ENCODE measurements at regions of chr10 and their contacts with region 1.

Region 1: DNA sequence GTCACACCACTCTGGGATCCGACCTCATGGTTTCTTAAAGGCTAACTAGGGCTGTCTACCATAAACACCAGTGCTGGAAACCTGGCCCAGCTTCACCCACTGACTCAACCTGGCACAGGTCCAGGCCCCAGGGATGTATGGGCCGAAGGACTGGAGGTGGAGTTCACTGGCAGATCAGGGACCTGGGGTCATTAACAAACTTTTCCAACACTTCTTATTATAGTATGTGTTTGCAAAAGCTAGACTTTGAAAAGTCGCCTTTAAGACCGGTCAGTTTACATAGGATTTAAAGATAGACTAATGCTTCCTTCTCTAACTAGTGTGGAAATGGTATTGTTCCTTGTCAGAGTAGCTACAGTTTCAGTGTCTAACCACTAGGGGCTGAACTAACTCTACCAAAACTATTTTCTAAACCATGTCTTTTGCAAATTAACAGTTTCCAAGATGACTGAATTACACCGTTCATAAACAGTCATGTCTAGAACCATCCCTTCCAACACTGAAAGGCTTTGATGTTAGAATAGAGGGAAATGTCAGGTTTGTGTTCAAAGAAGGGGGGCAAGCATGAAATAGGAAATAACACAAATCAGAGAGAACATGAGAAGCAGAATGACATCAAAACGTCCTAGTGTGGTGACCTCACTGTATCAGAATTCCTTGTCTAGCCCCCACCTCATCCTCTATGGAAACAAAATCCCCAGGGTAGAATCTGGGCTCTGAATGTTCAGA is 29.7 kb downstream of the STN1 start:
- DNase-seq: peak; percentile 73 to 86
- ATAC-seq: peak; percentile 86 to 89
- H3K4me3 ChIP-seq: no peak overlapping the region
- H3K27ac ChIP-seq: peak overlapping the region; percentile 78 to 86 (median 82)
- H3K4me1 ChIP-seq: peaks cover 18 to 28% of the 10 kb centered on the region in 2 donors
- H3K27me3 ChIP-seq: no peaks in the 10 kb centered on the region
- CTCF ChIP-seq: peak; percentile 81 to 96 (median 83)
- POLR2A ChIP-seq: no peak

Region 2: GRCh38 chr10:103870516-103870915 is 17.8 kb before region 1 on chr10:
- in situ Hi-C with region 1: no loop called
- intact Hi-C with region 1: no loop called
- DNase-seq: no peak
- ATAC-seq: no peak
- H3K4me3 ChIP-seq: no peak overlapping the region
- H3K27ac ChIP-seq: no peak overlapping the region
- H3K4me1 ChIP-seq: no peaks in the 10 kb centered on the region
- H3K27me3 ChIP-seq: no peaks in the 10 kb centered on the region
- CTCF ChIP-seq: no peak
- POLR2A ChIP-seq: no peak

Region 3: GRCh38 chr10:103918053-103918846 is 30.0 kb after region 1 on chr10 and contains the start of gene STN1:
- in situ Hi-C with region 1: no loop called
- intact Hi-C with region 1: loop called (anchors 2 kb)
- DNase-seq: peak; percentile 98
- ATAC-seq: peak; percentile 90 to 92
- H3K4me3 ChIP-seq: peak within 1 kb of the TSS; percentile 85 to 95 (median 89)
- H3K27ac ChIP-seq: peak within 1 kb of the TSS; percentile 92 to 98 (median 96)
- H3K4me1 ChIP-seq: peaks cover 31 to 33% of the 10 kb centered on the region in 2 donors
- H3K27me3 ChIP-seq: no peaks in the 10 kb centered on the region
- CTCF ChIP-seq: peak in 1 of 5 experiments; percentile 12
- POLR2A ChIP-seq: peak; percentile 96 to 97
- total RNA-seq, gene STN1: 15.1 to 24.7 (median 20.5) TPM

Region 4: DNA sequence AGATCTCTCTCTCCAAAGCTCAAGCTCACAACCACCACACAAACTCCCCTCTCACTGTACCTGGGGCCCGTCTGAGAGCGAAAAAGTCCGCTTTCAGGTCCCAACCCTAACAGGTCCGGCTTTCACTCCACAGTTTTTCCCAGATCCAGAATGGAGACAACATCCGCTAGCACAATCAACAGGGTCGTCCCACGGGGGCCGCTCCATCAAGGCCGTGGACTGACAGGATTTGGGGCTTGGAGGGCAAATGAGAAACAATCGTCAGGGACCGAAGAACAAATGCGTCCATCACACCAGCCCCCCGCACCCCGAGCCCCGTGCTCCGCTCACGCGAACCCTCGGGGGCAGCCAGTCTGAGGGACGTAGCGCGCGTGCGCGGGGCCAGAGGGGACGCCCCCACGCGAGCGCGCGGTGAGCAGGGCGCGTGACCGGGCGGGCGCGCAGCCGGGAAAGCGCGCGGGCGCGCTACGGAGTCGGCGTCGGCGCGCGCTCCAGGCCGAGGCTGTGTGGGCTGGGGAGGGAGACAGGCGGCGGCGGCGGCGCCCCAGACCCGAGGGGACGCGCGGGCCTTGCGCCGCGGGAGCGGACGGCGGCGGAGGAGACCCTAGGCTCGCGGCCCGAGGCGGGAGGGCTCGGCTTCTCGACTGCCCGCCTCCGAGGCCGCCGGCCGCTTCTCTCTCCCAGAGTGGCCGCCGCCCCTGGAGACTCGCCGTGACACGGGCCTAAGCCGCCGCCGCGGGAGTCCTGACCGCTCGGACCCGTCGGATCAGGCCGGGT is 78.6 kb after region 1 on chr10 and contains the start of gene SLK:
- in situ Hi-C with region 1: no loop called
- intact Hi-C with region 1: loop called (anchors 1 kb)
- DNase-seq: peak; percentile 68 to 80
- ATAC-seq: peak; percentile 88 to 91
- H3K4me3 ChIP-seq: peak within 1 kb of the TSS; percentile 71 to 97 (median 82)
- H3K27ac ChIP-seq: peak within 1 kb of the TSS; percentile 89 to 99 (median 92)
- H3K4me1 ChIP-seq: peaks cover 32 to 34% of the 10 kb centered on the region in 2 donors
- H3K27me3 ChIP-seq: no peaks in the 10 kb centered on the region
- CTCF ChIP-seq: peak in 1 of 5 experiments; percentile 20
- POLR2A ChIP-seq: peak; percentile 98
- total RNA-seq, gene SLK: 43.3 to 53.3 (median 49.8) TPM

Region 5: DNA sequence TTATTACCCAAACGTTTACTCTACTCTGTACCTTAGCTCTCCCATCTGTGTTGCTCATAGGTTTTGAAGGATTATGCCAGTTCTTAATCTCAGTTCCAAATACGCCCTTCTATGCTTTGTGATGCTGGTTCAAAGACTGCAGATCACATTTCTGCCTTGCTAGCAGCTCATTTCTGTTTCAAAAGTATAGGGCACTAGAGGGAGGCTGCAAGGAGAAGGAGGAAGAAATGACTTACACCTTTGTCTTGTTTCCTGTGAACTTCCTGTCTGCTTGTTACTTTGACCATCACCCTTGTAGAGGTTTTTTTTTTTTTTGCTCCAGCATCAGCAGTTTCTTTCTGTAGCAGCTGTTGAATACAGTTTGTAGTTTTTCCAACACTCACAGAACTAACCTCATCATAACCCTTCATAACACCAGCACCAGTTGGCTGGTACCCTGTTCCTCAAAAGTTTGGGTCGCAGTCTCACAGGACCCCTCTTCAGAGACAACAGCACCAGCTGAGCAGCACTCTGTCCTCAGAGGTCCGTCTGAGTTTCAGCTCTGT is 95.2 kb after region 1 on chr10:
- in situ Hi-C with region 1: loop called in 1 of 4 experiments (anchors 25 kb)
- intact Hi-C with region 1: no loop called
- DNase-seq: no peak
- ATAC-seq: no peak
- H3K4me3 ChIP-seq: no peak overlapping the region
- H3K27ac ChIP-seq: no peak overlapping the region
- H3K4me1 ChIP-seq: peaks cover 29 to 32% of the 10 kb centered on the region in 2 donors
- H3K27me3 ChIP-seq: no peaks in the 10 kb centered on the region
- CTCF ChIP-seq: no peak
- POLR2A ChIP-seq: no peak

Region 6: DNA sequence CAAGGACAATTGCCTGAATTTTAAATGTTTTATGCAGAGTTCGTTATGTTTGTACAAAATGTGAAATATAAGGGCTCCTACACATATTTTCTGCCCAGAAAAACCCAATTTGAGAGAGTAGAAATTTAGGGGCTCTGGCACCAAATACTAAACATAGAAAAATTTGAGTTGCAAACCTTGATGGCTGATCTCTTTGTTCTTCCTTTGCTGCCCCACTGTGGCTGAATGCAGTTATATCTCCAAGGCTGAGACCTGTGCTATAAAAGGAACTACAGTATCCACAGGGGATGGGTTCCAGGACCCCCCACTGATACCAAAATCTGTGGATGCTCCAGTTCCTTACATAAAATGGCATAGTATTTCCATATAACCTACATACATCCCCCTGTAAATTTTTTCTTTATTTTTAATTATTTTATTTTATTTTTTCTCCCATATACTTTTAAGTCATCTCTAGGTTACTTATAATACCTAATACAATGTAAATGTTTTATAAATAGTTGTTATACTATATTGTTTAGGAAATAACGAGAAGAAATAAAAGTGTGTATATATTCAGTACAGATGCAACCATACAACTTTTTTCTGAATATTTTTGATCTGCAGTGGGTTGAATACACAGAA is 321.4 kb after region 1 on chr10:
- in situ Hi-C with region 1: loop called in 3 of 4 experiments (anchors 10 to 25 kb)
- intact Hi-C with region 1: loop called (anchors 1 kb)
- DNase-seq: no peak
- ATAC-seq: peak in 1 of 2 donors; percentile 27
- H3K4me3 ChIP-seq: no peak overlapping the region
- H3K27ac ChIP-seq: no peak overlapping the region
- H3K4me1 ChIP-seq: peaks cover 5 to 14% of the 10 kb centered on the region in 2 donors
- H3K27me3 ChIP-seq: no peaks in the 10 kb centered on the region
- CTCF ChIP-seq: peak in 4 of 5 experiments; percentile 30 to 48 (median 43)
- POLR2A ChIP-seq: no peak

Region 7: GRCh38 chr10:104353325-104354048 is 465.2 kb after region 1 on chr10 and contains the start of gene CFAP58:
- in situ Hi-C with region 1: no loop called
- intact Hi-C with region 1: loop called (anchors 5 kb)
- DNase-seq: peak; percentile 85 to 92
- ATAC-seq: peak; percentile 92
- H3K4me3 ChIP-seq: peak within 1 kb of the TSS; percentile 38 to 60 (median 54)
- H3K27ac ChIP-seq: peak within 1 kb of the TSS in 1 of 4 donors; percentile 20
- H3K4me1 ChIP-seq: peaks cover 11 to 22% of the 10 kb centered on the region in 2 donors
- H3K27me3 ChIP-seq: no peaks in the 10 kb centered on the region
- CTCF ChIP-seq: peak; percentile 71 to 88 (median 81)
- POLR2A ChIP-seq: no peak
- total RNA-seq, gene CFAP58: 0.13 to 0.36 (median 0.27) TPM in 3 of 4 donors, not detected in the other

Measured in gastrocnemius medialis (tissue), 4 donors.